Activated naive CD4-positive, alpha-beta T cell treated with anti-CD3 and anti-CD28 coated beads for 36 hours (primary cell): ENCODE measurements at regions of chr4 and their contacts with region 1.

Region 1: DNA sequence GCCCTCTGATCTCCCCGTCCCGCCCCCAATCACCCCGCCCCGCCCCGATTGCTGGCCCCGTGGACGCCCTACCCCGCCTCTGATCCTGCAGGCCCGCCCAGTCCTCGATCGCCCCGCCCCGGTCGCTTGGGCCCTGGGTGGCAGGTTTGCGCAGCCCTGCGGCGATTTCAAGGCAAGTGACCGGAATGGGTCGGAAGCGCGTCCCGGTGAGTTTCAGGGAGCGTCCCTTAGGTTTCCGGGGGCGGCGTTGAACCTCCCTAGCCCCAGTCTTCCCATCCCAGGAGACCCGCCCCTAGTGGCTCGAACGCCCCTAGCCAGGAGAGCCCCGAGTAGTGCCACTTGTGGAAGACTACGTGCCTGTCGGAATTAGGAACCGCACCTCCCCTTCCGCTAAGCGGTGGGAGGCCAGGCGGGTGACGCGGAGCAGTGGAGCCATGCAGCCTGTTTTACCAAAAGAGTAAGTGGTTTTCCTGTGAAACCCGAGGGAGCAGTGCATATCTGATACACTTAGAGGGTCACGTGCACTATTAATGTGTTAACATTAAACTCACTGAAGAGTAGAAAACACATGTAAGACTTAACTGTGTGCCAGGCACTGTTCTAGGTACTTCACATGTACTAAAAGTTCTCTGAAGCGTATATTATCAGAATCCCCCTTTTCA is 354 bp upstream of the TEC start:
- DNase-seq: peak; percentile 93
- H3K4me3 Mint-ChIP-seq: peak overlapping the region; percentile 93
- H3K27ac Mint-ChIP-seq: peak overlapping the region; percentile 83
- H3K4me1 Mint-ChIP-seq: peaks cover 9% of the 10 kb centered on the region
- H3K27me3 Mint-ChIP-seq: no peaks in the 10 kb centered on the region

Region 2: DNA sequence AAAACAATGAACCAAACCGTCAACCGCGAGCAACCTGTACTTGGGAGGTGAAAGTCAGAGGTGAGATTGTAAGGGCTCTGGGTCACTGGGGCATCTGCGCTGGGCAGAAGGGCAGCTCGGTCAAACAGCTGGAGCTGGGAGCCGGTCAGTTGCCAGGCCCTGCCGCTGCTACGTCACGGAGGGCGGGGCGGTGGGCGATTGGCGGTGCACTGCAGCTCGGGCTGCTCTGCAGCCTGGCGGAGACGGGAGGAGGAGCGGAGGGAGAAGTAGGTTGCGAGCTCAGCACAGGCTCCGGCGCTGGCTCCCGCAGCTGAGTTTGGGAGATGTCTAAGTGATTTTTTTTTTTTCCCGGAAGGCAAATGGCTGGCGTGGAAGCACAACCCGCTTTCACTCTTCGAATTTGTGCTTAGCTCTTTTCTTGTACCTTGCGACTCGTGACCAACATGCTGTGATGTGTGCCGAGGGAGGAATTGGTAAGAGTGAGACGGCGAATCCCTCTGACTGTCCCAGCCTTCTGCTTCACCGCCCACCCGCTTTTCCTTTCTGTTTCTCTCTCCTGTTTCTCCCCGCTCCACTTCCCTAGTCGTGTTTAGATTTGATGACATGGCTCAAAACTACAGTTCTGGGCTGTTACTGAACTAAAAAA is 784.8 kb before region 1 on chr4 and contains the start of gene ATP10D:
- CTCF ChIA-PET with region 1: no interaction called
- intact Hi-C with region 1: loop called (anchors 10 kb)
- DNase-seq: peak; percentile 82
- H3K4me3 Mint-ChIP-seq: peak within 1 kb of the TSS; percentile 93
- H3K27ac Mint-ChIP-seq: peak within 1 kb of the TSS; percentile 65
- H3K4me1 Mint-ChIP-seq: peaks cover 16% of the 10 kb centered on the region
- H3K27me3 Mint-ChIP-seq: no peaks in the 10 kb centered on the region
- total RNA-seq, gene ATP10D: 2.7 to 3.1 TPM

Region 3: GRCh38 chr4:48008021-48008596 is 261.9 kb before region 1 on chr4:
- CTCF ChIA-PET with region 1: no interaction called
- intact Hi-C with region 1: loop called (anchors 2 kb)
- DNase-seq: no peak
- H3K4me3 Mint-ChIP-seq: no peak overlapping the region
- H3K27ac Mint-ChIP-seq: no peak overlapping the region
- H3K4me1 Mint-ChIP-seq: no peaks in the 10 kb centered on the region
- H3K27me3 Mint-ChIP-seq: no peaks in the 10 kb centered on the region

Region 4: DNA sequence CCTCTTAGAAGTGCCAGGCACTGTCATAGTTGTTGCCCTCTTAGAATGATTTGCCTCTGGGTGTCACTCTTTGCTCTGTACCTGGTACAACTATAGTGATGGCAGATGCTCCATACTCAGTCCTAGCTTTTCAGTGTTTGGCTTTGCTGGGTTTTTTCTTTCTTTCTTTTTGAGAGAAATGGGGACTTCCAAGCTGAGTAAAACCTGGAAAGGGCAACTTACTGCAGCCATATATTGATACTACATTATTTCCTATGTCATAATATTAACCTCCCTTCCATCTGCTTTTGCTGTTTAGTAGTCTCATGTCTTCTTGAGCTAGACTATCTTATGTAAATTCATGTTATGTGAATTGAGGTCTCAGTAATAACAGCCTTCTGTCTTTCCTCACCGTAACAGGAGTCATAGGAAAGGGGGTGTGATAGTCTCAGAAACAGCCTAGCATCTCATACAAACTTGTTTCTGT is 204.4 kb before region 1 on chr4:
- CTCF ChIA-PET with region 1: no interaction called
- intact Hi-C with region 1: loop called (anchors 1 kb)
- DNase-seq: peak; percentile 48
- H3K4me3 Mint-ChIP-seq: no peak overlapping the region
- H3K27ac Mint-ChIP-seq: peak overlapping the region; percentile 44
- H3K4me1 Mint-ChIP-seq: peaks cover 36% of the 10 kb centered on the region
- H3K27me3 Mint-ChIP-seq: no peaks in the 10 kb centered on the region

Region 5: GRCh38 chr4:48429709-48430474 is 159.9 kb after region 1 on chr4:
- CTCF ChIA-PET with region 1: no interaction called
- intact Hi-C with region 1: loop called (anchors 1 kb)
- DNase-seq: peak; percentile 16
- H3K4me3 Mint-ChIP-seq: no peak overlapping the region
- H3K27ac Mint-ChIP-seq: no peak overlapping the region
- H3K4me1 Mint-ChIP-seq: peaks cover 49% of the 10 kb centered on the region
- H3K27me3 Mint-ChIP-seq: no peaks in the 10 kb centered on the region

Region 6: DNA sequence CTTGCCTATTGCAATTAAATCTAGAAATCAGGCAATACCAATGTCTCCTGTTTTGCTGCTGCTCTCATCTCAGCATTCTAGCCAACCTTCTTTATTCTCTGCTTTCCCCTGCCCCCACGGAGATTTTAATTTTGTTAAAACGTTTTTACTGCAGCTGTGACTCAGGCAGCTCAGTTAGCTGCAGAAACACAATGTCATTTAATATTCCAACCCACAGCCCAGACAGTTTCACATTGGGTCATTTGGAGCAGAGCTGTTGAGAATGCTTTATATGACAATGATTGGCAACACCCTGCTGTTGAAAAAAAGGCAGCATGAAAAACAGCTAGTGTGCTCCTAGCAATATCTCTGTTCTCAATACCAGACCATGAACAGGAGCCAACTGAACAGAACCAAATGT is 200.6 kb after region 1 on chr4:
- CTCF ChIA-PET with region 1: no interaction called
- intact Hi-C with region 1: no loop called
- DNase-seq: no peak
- H3K4me3 Mint-ChIP-seq: no peak overlapping the region
- H3K27ac Mint-ChIP-seq: no peak overlapping the region
- H3K4me1 Mint-ChIP-seq: no peaks in the 10 kb centered on the region
- H3K27me3 Mint-ChIP-seq: peaks cover 4% of the 10 kb centered on the region